ENCODE measurements at regions of chr12 and their contacts with region 1.

Region 1: DNA sequence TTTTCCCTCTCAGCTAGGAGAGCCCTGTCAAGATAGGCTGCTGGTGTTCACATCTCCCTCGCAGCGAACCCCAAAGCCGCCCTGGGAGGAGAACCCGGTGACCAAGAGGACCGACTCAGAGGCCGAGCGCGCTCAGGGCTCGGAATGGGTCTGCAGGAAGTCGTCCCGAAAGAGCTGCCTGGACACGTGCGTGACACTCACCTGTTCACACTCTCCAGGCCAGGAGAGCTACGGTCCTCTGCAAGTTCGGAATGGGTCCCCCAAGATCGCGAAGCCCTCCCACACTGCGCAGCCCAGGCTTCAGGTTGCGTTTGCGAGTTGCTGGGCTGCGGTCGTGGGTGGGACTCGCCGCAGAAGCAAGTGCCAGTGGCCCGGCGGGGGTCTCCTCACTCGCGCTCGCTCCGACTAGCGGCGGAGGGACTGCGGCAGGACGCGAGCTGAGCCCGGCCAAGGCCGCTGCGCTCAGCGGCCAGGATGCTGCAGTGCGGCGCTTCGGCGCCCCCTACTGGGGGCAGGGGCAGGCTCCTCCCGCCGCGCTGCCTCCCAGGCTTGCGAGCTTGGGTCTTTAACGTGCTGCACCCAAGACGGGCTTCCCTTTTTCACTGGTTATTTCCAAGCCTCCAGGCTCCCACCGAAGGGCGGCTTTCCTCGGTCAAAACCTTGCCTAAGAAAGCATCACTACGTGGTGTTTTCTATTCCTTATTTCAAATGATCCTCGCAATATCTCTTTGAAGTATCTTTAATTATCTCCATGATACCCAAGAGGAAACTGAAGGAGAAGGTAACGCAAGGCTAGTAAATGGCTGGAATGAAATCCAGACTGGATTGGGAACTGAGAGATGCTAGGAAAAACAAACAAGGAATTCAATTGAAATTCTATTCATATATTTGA is at the start of gene RERG:
- DNase-seq: no peak
- H3K4me3 ChIP-seq: peak within 1 kb of the TSS; percentile 40
- H3K27me3 ChIP-seq: peaks cover 13% of the 10 kb centered on the region
- CTCF ChIP-seq: peak; percentile 86
- polyA plus RNA-seq, gene RERG: 0.04 TPM in 1 of 2 replicates, not detected in the other

Region 2: DNA sequence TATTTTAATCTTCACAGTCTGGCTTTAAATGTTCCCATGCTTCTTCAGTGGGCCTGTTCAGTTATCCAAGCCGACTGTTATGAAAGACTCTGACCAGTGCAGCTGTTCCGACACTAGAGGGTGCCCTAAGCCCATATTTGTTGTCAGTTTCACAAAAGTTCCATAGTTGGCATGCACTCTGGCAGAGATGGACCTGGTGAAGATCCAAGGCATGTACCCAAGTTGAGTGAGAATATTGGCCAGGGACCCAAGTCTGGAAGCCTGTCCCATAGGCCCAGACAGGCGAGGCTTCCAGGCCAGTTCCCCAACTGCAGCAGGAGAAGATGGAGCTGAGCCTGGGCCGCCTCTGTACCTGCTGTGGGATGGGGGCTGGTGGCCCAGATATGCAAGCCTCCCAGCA is 497.5 kb before region 1 on chr12:
- CTCF ChIA-PET with region 1: interaction called, 30 read pairs
- POLR2A ChIA-PET with region 1: no interaction called
- DNase-seq: no peak
- H3K4me3 ChIP-seq: no peak overlapping the region
- H3K27me3 ChIP-seq: no peaks in the 10 kb centered on the region; the same call in 1 of the 2 replicates
- CTCF ChIP-seq: peak; percentile 75

Region 3: GRCh38 chr12:14810953-14811483 is 410.2 kb before region 1 on chr12:
- CTCF ChIA-PET with region 1: interaction called, 12 read pairs
- POLR2A ChIA-PET with region 1: no interaction called
- DNase-seq: no peak
- H3K4me3 ChIP-seq: no peak overlapping the region
- H3K27me3 ChIP-seq: no peaks in the 10 kb centered on the region
- CTCF ChIP-seq: peak; percentile 59

Region 4: DNA sequence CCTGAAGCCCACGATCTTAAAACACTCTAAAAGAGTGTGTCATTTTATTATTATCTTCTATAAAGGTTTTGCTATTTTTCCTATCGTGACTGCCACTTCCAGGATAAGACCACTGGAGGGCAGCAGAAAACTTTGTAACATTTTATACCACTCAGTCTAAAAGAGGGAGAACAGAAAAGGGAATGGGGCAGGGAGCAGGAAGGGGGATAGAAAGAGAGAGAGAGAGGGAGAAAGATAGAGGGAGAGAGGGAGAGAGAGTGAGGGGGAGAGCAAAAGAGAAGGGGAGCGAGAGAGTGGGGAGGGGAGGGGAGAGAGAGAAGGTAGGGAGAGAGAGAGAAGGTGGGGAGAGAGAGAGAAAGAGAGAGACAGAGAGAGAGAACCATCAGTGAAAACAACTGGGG is 375.9 kb before region 1 on chr12:
- CTCF ChIA-PET with region 1: interaction called, 12 read pairs
- POLR2A ChIA-PET with region 1: no interaction called
- DNase-seq: no peak
- H3K4me3 ChIP-seq: no peak overlapping the region
- H3K27me3 ChIP-seq: no peaks in the 10 kb centered on the region
- CTCF ChIP-seq: peak; percentile 77

Region 5: GRCh38 chr12:15151161-15152120 is 69.8 kb before region 1 on chr12:
- CTCF ChIA-PET with region 1: interaction called, 16 read pairs
- POLR2A ChIA-PET with region 1: no interaction called
- DNase-seq: no peak
- H3K4me3 ChIP-seq: no peak overlapping the region
- H3K27me3 ChIP-seq: no peaks in the 10 kb centered on the region
- CTCF ChIP-seq: peak; percentile 41

Region 6: GRCh38 chr12:15208125-15208524 is 13.1 kb before region 1 on chr12:
- CTCF ChIA-PET with region 1: interaction called, 19 read pairs
- POLR2A ChIA-PET with region 1: no interaction called
- DNase-seq: no peak
- H3K4me3 ChIP-seq: no peak overlapping the region
- H3K27me3 ChIP-seq: peaks cover 1% of the 10 kb centered on the region; the same call in 1 of the 2 replicates
- CTCF ChIP-seq: peak; percentile 38